Ascending aorta (tissue), 2 donors: ENCODE measurements at regions of chr20 and their contacts with region 1.

Region 1: DNA sequence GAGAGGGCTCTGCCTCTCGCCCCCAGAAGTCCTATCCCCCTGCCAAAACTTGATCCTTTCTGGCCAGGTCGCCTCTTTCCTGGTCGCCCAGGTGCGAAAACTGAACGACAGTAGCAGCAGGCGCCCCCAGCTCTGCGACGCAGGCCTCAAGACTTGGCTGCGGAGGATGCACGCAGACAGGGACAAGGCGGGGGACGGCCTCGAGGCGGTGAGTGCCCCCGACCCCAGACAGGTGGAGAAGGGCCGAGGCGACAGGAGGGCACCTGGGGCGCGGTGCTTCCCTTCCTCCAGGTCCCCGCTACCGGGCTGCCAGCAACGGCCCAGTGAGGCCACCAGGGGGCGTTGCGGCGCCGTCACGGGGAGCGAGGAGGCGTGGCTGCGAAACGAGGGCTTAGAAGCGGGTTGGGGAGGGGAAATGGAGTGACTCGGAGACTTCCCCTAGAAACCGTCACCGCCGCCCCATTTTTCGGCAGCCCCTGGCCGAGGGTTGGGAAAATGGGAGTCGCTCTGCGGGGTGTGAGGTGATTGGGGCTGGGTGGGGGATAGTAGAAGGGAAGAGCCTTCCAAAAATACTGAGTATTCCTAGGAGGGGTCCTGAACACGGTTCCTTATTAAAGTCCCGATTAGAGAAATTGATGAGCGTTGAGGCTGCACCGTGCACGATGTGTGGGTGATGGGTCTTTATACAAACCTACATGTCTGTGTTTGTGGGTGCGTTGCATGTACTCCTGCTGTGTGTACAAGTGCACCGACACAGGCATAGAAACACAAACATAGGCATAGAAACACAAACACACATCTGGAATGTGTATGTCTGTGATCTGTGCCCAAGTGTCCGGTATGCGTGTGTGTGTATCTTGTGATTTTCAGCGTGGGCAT is 44.6 kb downstream of the ARHGAP40 start:
- DNase-seq: peak in 1 of 2 donors; percentile 79
- H3K4me3 ChIP-seq: no peak overlapping the region
- H3K27ac ChIP-seq: no peak overlapping the region
- H3K4me1 ChIP-seq: no peaks in the 10 kb centered on the region
- H3K27me3 ChIP-seq: peaks cover 6% of the 10 kb centered on the region
- CTCF ChIP-seq: peak; percentile 86 to 92 (median 91)

Region 2: DNA sequence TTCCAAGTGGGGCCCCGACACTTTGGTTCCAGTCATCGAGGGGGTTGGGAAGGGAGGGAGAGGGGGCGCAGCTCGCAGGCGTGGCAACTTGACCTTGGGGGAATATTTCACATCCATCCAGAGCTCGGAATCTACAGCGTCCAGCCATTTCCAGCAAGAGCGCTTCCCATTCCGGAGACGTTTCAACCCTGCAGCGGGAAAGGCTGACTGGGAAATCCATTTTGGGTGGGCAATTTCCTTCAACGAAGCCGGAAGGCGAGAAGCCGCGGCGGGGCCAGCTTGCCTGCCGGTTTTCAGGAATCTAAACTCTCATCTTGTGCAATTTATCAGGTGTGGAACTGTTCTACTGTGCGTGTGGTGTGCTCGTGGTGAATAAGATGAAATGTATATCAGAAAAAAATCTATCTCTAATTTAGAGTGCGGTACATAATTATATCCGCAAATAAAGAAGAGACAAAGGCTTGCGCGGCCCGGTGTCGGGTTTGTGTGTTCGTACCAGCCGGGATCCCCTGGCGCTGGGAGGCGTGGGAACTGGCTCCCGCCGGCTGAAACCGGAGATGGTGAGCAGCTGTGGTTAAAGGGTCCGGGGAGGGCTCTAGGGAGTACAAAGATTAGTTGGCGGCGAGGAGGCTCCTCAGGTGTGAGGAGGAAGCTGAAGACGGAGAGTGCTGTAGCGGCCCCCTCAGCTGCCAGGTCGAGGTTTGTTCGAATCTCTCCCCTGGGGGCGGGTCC is 82.9 kb after region 1 on chr20:
- intact Hi-C with region 1: loop called (anchors 2 kb)
- DNase-seq: no peak
- H3K4me3 ChIP-seq: no peak overlapping the region
- H3K27ac ChIP-seq: no peak overlapping the region
- H3K4me1 ChIP-seq: peaks cover 6 to 14% of the 10 kb centered on the region in 2 donors
- H3K27me3 ChIP-seq: peaks cover 52% of the 10 kb centered on the region
- CTCF ChIP-seq: no peak

Region 3: DNA sequence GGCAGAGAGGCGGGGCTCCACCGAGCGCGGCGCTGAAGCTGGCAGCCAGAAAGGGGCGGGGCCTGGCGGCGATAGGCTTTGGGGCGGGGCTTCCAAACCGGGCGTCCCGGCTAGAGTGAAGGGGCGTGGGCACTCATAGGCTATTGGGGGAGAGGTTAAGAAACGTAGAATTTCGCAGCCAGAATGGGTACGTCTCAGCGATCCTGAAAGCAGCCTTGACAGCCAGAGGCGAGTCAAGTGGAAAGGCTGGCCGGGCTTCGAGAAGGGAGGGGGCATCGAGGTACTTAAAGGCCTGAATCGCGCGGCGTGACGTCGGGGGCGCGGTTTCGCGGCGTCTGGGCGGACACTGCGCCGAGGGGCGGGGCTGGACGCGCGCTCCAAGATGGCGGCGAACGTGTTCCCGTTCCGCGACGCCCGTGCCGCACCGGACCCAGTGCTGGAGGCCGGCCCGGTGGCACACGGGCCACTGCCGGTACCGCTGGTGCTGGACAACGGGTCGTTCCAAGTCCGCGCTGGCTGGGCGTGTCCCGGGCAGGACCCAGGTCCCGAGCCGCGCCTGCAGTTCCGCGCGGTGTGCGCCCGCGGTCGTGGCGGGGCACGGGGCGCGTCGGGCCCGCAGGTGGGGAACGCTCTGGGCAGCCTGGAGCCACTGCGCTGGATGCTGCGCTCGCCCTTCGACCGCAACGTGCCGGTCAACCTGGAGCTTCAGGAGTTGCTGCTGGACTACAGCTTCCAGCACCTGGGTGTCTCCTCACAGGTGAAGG is 102.1 kb after region 1 on chr20 and contains the start of gene ACTR5:
- intact Hi-C with region 1: loop called (anchors 2 kb)
- DNase-seq: peak; percentile 50 to 94
- H3K4me3 ChIP-seq: peak within 1 kb of the TSS; percentile 79 to 82
- H3K27ac ChIP-seq: peak within 1 kb of the TSS; percentile 87 to 91
- H3K4me1 ChIP-seq: peaks cover 0 to 4% of the 10 kb centered on the region in 2 donors
- H3K27me3 ChIP-seq: no peaks in the 10 kb centered on the region
- CTCF ChIP-seq: no peak
- total RNA-seq, gene ACTR5: 5.9 TPM

Region 4: GRCh38 chr20:38790200-38791053 is 144.2 kb after region 1 on chr20:
- intact Hi-C with region 1: loop called (anchors 5 kb)
- DNase-seq: no peak
- H3K4me3 ChIP-seq: no peak overlapping the region
- H3K27ac ChIP-seq: no peak overlapping the region
- H3K4me1 ChIP-seq: no peaks in the 10 kb centered on the region
- H3K27me3 ChIP-seq: no peaks in the 10 kb centered on the region
- CTCF ChIP-seq: peak; percentile 39 to 58 (median 46)

Region 5: DNA sequence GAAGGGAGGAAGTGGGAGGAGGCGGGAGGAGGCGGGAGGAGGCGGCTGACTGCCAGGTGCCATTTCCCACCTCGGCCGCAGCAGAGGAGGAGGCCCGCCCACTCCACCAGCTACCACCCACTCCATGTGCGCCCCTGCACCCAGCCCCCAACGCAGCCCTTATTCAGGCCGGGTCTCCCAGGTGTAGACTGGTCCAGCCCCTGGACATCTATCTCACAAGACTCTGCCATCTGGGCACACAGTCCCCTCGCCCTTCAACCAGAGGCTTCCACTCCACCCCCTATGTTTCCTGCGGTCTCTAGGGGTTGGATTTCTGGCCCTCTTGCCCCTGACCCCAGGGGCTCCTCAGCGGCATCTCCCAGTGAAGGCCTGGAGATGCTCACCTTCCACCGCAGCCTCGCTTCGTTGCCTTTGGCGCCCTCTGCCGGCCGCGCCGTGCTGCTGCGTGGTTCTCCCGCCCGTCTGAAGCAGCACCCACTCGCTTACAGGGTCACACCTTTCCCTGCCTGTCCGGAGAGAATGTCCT is 247.4 kb after region 1 on chr20:
- intact Hi-C with region 1: loop called (anchors 1 kb)
- DNase-seq: peak in 1 of 2 donors; percentile 80
- H3K4me3 ChIP-seq: no peak overlapping the region
- H3K27ac ChIP-seq: no peak overlapping the region
- H3K4me1 ChIP-seq: peaks cover 0 to 2% of the 10 kb centered on the region in 2 donors
- H3K27me3 ChIP-seq: no peaks in the 10 kb centered on the region
- CTCF ChIP-seq: peak; percentile 53 to 96 (median 89)